K562 (cell line): ENCODE measurements at regions of chr12 and their contacts with region 1.

Region 1: GRCh38 chr12:49288412-49288853 is 6.5 kb upstream of the PRPH start:
- DNase-seq: peak; percentile 68 to 77 (median 76)
- ATAC-seq: peak; percentile 65
- H3K4me3 ChIP-seq: no peak overlapping the region
- H3K27ac ChIP-seq: no peak overlapping the region
- H3K4me1 ChIP-seq: peaks cover 5 to 14% of the 10 kb centered on the region in 2 experiments
- H3K27me3 ChIP-seq: no peaks in the 10 kb centered on the region
- CTCF ChIP-seq: peak; percentile 85 to 92 (median 91)
- EP300 ChIP-seq: no peak
- POLR2A ChIP-seq: no peak
- RAD21 ChIP-seq: peak; percentile 90 to 92

Region 2: DNA sequence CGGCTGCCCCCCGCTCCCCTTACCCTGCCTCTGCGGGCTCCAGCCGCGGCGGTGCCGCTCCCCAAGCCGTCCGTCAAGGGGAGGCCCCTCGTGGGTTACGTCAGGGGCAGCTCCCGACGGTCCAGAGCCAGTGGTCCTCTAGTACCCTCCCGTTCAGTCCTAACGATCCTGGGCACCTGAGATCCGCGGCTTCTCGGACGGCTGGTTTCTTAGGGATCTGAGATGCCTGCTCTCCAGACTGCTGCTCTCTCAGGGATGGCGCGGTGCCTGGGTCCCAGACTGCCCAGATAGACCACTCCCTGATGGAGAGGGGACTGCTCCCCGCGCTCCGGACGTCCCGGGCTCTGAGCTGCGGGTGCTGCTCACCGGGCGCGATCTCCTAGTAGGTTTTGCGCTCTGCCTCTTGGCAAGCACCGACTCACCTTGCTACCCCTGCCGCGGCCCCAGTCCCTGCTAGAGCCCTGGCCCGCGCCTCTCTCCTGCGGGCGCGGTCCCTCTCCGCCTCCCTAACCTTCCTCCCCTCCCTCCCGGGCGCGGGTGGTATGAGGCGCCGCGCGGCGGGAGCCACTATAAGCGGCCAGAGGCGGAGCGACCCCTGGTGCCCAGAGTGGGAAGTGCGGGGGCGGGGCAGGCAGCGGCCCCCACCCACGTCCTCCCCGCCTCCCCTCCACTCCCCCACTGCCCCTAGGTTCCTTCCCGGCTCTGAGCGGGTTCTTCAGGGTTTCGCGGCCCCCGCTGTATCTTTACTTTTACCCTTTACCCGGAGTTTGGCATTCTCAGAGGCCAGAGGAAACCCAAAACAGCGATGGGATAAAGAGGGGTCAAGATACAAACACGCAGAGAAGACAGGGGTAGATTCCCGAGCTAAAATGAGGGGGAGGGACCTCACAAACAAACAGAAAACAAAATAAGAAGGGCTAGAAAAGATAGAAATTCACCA is 48.5 kb after region 1 on chr12 and contains the start of gene C1QL4:
- CTCF ChIA-PET with region 1: interaction called, 49 read pairs
- POLR2A ChIA-PET with region 1: interaction called, 6 read pairs
- in situ Hi-C with region 1: loop called (anchors 5 kb)
- intact Hi-C with region 1: loop called (anchors 1 kb)
- DNase-seq: peak; percentile 93 to 96 (median 96)
- ATAC-seq: peak; percentile 91
- H3K4me3 ChIP-seq: peak within 1 kb of the TSS; percentile 54
- H3K27ac ChIP-seq: peak within 1 kb of the TSS; percentile 50; the same call in 2 of the 3 replicates
- H3K4me1 ChIP-seq: peaks cover 11 to 39% of the 10 kb centered on the region in 2 experiments
- H3K27me3 ChIP-seq: no peaks in the 10 kb centered on the region
- CTCF ChIP-seq: peak; percentile 72 to 97 (median 87)
- EP300 ChIP-seq: no peak
- POLR2A ChIP-seq: 0 out of 2 replicates have a peak, but pooled peaks have one; percentile 33
- RAD21 ChIP-seq: peak in 1 of 2 experiments; percentile 58; a peak in 2 of 4 replicates
- polyA plus RNA-seq, gene C1QL4: 0.08 to 0.10 TPM

Region 3: GRCh38 chr12:49342066-49342913 is 53.9 kb after region 1 on chr12:
- CTCF ChIA-PET with region 1: interaction called, 49 read pairs
- POLR2A ChIA-PET with region 1: interaction called, 6 read pairs
- in situ Hi-C with region 1: loop called (anchors 5 kb)
- intact Hi-C with region 1: loop called (anchors 1 kb)
- DNase-seq: peak; percentile 94 to 96 (median 94)
- ATAC-seq: peak; percentile 87
- H3K4me3 ChIP-seq: peak overlapping the region; percentile 41
- H3K27ac ChIP-seq: no peak overlapping the region
- H3K4me1 ChIP-seq: peaks cover 31 to 62% of the 10 kb centered on the region in 2 experiments
- H3K27me3 ChIP-seq: peaks cover 24 to 26% of the 10 kb centered on the region in 2 experiments; a peak in 4 of 5 replicates
- CTCF ChIP-seq: peak; percentile 98 to 99 (median 98)
- EP300 ChIP-seq: peak; percentile 21; the same call in 1 of the 2 replicates
- POLR2A ChIP-seq: no peak
- RAD21 ChIP-seq: peak; percentile 86 to 94

Region 4: GRCh38 chr12:49515266-49515665 is 226.8 kb after region 1 on chr12:
- CTCF ChIA-PET with region 1: interaction called, 10 read pairs
- POLR2A ChIA-PET with region 1: no interaction called
- in situ Hi-C with region 1: loop called (anchors 5 kb)
- intact Hi-C with region 1: no loop called
- DNase-seq: no peak
- ATAC-seq: no peak
- H3K4me3 ChIP-seq: no peak overlapping the region
- H3K27ac ChIP-seq: no peak overlapping the region
- H3K4me1 ChIP-seq: no peaks in the 10 kb centered on the region
- H3K27me3 ChIP-seq: no peaks in the 10 kb centered on the region
- CTCF ChIP-seq: no peak
- EP300 ChIP-seq: no peak
- POLR2A ChIP-seq: no peak
- RAD21 ChIP-seq: no peak

Region 5: DNA sequence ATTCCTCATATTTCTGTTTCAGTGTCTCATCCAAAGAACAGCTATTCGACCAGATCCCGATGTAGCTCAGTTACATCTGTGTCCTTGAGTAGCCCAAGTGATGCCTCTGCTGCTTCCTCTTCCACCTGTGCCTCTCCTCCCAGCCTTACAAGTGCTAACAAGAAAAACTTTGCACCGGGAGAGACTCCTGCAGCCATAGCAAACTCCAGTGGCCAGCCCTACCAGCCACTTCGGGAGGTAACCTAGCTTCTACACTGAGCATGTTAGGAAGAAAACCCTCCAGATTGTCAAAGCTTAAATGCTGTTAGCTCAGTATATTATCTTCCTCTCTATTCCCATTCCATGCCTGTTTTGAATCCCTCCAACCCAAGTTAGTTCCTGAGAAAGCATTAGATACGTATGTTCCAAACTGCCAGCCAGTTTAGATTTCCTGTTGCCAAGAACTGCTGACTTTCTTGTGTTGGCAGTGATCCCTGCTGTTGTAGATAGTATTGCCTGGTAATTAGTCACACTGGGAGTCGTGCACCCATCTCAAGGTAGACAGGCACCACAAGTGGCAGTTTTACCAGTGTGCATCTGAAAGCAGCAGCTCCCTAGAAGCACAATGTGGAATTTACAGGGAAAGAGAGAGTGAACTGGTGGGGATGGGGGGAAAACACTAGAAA is 236.4 kb after region 1 on chr12:
- CTCF ChIA-PET with region 1: no interaction called
- POLR2A ChIA-PET with region 1: no interaction called
- in situ Hi-C with region 1: loop called (anchors 5 kb)
- intact Hi-C with region 1: no loop called
- DNase-seq: no peak
- ATAC-seq: no peak
- H3K4me3 ChIP-seq: no peak overlapping the region
- H3K27ac ChIP-seq: no peak overlapping the region
- H3K4me1 ChIP-seq: no peaks in the 10 kb centered on the region
- H3K27me3 ChIP-seq: no peaks in the 10 kb centered on the region
- CTCF ChIP-seq: no peak
- EP300 ChIP-seq: no peak
- POLR2A ChIP-seq: no peak
- RAD21 ChIP-seq: no peak

Region 6: DNA sequence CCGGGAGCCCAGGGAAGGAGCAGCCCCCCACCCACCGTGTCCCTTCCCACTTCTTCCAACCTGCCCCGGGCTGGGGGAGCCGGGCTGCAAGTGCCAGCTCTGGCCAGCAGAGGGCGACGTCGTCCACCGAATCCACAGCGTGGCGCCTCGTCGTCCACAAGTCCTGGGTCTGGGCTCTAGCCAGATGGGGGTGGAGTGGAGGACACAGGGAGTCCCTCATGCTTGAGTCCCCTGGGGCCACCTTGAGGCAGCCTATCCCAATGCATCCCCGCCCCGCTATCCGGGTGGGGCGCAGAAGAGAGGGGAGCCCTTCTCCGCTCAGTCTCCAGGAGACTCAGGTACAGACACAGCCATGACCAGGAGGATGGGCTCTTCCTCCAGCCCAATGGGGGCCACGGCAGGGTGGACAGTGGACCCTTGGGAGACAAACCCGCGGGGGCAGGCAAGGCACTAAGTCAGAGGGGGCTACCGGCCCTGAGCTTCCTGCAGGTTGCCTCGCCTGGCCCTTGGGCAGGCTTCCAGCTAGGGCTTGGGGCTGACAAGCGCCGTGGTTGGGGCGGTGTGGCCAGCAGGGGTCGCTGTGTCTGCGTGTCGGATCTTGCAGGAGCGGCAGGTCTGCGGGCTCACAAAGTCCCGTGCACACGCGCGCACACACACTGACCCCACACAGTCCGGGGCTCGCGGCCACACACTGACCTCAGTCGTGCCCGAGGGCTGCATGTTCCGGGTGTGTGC is 678.8 kb after region 1 on chr12:
- CTCF ChIA-PET with region 1: no interaction called
- POLR2A ChIA-PET with region 1: no interaction called
- in situ Hi-C with region 1: no loop called
- intact Hi-C with region 1: no loop called
- DNase-seq: peak; percentile 92 to 96 (median 94)
- ATAC-seq: peak; percentile 90
- H3K4me3 ChIP-seq: peak overlapping the region; percentile 49
- H3K27ac ChIP-seq: peak overlapping the region; percentile 29; the same call in 1 of the 3 replicates
- H3K4me1 ChIP-seq: peaks cover 12 to 26% of the 10 kb centered on the region in 2 experiments; a peak in 4 of 5 replicates
- H3K27me3 ChIP-seq: peaks cover 28 to 70% of the 10 kb centered on the region in 2 experiments; a peak in 4 of 5 replicates
- CTCF ChIP-seq: peak; percentile 83 to 97 (median 94)
- EP300 ChIP-seq: no peak
- POLR2A ChIP-seq: no peak
- RAD21 ChIP-seq: peak; percentile 87 to 93

Region 7: GRCh38 chr12:50283229-50283923 is 994.9 kb after region 1 on chr12 and contains the start of gene LIMA1:
- CTCF ChIA-PET with region 1: no interaction called
- POLR2A ChIA-PET with region 1: no interaction called
- in situ Hi-C with region 1: no loop called
- intact Hi-C with region 1: no loop called
- DNase-seq: peak; percentile 95 to 97 (median 96)
- ATAC-seq: peak; percentile 95
- H3K4me3 ChIP-seq: peak within 1 kb of the TSS; percentile 67
- H3K27ac ChIP-seq: peak within 1 kb of the TSS; percentile 93
- H3K4me1 ChIP-seq: peaks cover 3 to 7% of the 10 kb centered on the region in 2 experiments; a peak in 2 of 5 replicates
- H3K27me3 ChIP-seq: no peaks in the 10 kb centered on the region
- CTCF ChIP-seq: peak; percentile 41 to 49 (median 45); a peak in 4 of 6 replicates
- EP300 ChIP-seq: no peak
- POLR2A ChIP-seq: peak; percentile 89
- RAD21 ChIP-seq: peak; percentile 14 to 49; a peak in 2 of 4 replicates
- polyA plus RNA-seq, gene LIMA1: 20.2 to 23.7 TPM